Cardiac septum (tissue), 1 donor: ENCODE measurements at regions of chr17 and their contacts with region 1.

Region 1: GRCh38 chr17:9072696-9073339 is 51.5 kb downstream of the NTN1 start:
- DNase-seq: no peak

Region 2: GRCh38 chr17:9021158-9021991 is 51.4 kb before region 1 on chr17 and contains the start of gene NTN1:
- intact Hi-C with region 1: loop called (anchors 5 kb)
- DNase-seq: no peak
- total RNA-seq, gene NTN1: 11.5 TPM

Region 3: GRCh38 chr17:9522074-9522473 is 449.3 kb after region 1 on chr17:
- intact Hi-C with region 1: no loop called
- DNase-seq: no peak